Heart right ventricle (tissue), 16 donors: ENCODE measurements at regions of chr11 and their contacts with region 1.

Region 1: DNA sequence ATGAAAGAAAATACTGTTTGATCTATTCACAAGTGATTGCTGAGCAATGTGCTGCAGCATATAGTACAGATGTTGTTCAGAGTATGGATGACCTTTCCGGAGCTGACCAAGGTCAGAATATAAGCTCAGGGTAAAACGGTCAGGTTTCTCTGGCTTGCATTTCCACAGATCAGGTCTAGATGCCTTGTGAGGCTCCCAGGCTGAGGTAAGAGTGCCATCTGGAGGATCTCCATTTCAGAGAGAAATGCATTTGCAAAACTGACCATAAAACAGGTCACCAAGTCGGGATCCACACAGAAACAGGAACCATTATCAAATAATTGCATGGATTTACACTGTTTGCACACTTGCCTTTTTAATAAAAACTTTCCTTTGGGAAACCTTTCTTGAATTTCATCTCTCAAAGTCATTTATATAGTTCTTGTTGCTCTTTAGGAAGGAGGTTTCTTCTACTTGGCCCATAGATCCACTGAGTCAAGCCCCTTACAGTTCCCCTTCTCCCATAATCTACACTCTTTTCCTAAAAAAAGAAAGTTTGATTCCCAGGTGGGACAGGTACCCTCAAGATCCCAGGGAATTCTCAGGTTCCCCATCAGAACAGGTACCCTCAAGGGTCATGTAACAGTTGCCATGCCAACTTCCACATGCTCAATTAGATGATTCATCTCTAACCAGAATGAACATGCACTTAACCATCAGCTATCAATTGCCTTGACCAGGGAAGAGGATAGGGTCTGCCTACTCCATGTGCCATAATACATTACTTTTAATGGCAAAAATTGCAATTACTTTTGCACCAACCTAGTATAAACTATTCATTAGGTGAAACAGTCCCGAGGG is 25.0 kb upstream of the TMPRSS5 start:
- DNase-seq: peak in 1 of 2 donors; percentile 16
- ATAC-seq: peak in 5 of 8 donors; percentile 17 to 74 (median 63)
- H3K4me3 ChIP-seq: no peak overlapping the region
- H3K27ac ChIP-seq: no peak overlapping the region
- H3K4me1 ChIP-seq: peaks cover 0 to 5% (median 0%) of the 10 kb centered on the region in 9 donors
- H3K27me3 ChIP-seq: no peaks in the 10 kb centered on the region
- CTCF ChIP-seq: peak; percentile 42 to 77 (median 64)

Region 2: GRCh38 chr11:113532697-113533424 is 198.2 kb before region 1 on chr11:
- intact Hi-C with region 1: loop called in 6 of 10 experiments (anchors 5 to 10 kb)
- DNase-seq: peak; percentile 68 to 75
- ATAC-seq: peak in 7 of 8 donors; percentile 58 to 79 (median 76)
- H3K4me3 ChIP-seq: no peak overlapping the region
- H3K27ac ChIP-seq: no peak overlapping the region
- H3K4me1 ChIP-seq: no peaks in the 10 kb centered on the region
- H3K27me3 ChIP-seq: peaks cover 0 to 24% (median 4%) of the 10 kb centered on the region in 7 donors
- CTCF ChIP-seq: peak; percentile 82 to 92 (median 86)

Region 3: GRCh38 chr11:113553235-113553634 is 177.9 kb before region 1 on chr11:
- intact Hi-C with region 1: loop called in 1 of 10 experiments (anchors 10 kb)
- DNase-seq: no peak
- ATAC-seq: peak in 3 of 8 donors; percentile 29 to 61 (median 31)
- H3K4me3 ChIP-seq: no peak overlapping the region
- H3K27ac ChIP-seq: no peak overlapping the region
- H3K4me1 ChIP-seq: peaks cover 0 to 5% (median 0%) of the 10 kb centered on the region in 9 donors
- H3K27me3 ChIP-seq: peaks cover 0 to 11% (median 0%) of the 10 kb centered on the region in 7 donors
- CTCF ChIP-seq: no peak